SK-N-SH (cell line): ENCODE measurements at regions of chr2 and their contacts with region 1.

Region 1: GRCh38 chr2:26577434-26578112 is 63.6 kb downstream of the CIB4 start:
- DNase-seq: peak; percentile 94
- H3K4me3 ChIP-seq: peak overlapping the region in 1 of 2 experiments; percentile 2; a peak in 1 of 4 replicates
- H3K27ac ChIP-seq: no peak overlapping the region
- H3K4me1 ChIP-seq: peaks cover 0 to 3% of the 10 kb centered on the region in 2 experiments; a peak in 1 of 4 replicates
- H3K27me3 ChIP-seq: peaks cover 67% of the 10 kb centered on the region
- CTCF ChIP-seq: peak; percentile 99
- EP300 ChIP-seq: no peak
- RAD21 ChIP-seq: peak; percentile 98

Region 2: GRCh38 chr2:26345545-26346453 is 231.8 kb before region 1 on chr2 and contains the start of gene SELENOI:
- CTCF ChIA-PET with region 1: interaction called, 16 read pairs
- POLR2A ChIA-PET with region 1: interaction called, 4 read pairs
- DNase-seq: peak; percentile 100
- H3K4me3 ChIP-seq: peak within 1 kb of the TSS; percentile 90 to 95
- H3K27ac ChIP-seq: peak within 1 kb of the TSS; percentile 87 to 95
- H3K4me1 ChIP-seq: peaks cover 10 to 23% of the 10 kb centered on the region in 2 experiments; a peak in 3 of 4 replicates
- H3K27me3 ChIP-seq: no peaks in the 10 kb centered on the region
- CTCF ChIP-seq: no peak
- EP300 ChIP-seq: peak in 1 of 2 experiments; percentile 46; a peak in 1 of 4 replicates
- RAD21 ChIP-seq: no peak; the same call in 1 of the 2 replicates
- polyA plus RNA-seq, gene SELENOI: 4.4 and 6.2 TPM in 2 replicates

Region 3: GRCh38 chr2:26483957-26484565 is 93.5 kb before region 1 on chr2:
- CTCF ChIA-PET with region 1: interaction called, 10 read pairs
- POLR2A ChIA-PET with region 1: no interaction called
- DNase-seq: no peak
- H3K4me3 ChIP-seq: no peak overlapping the region
- H3K27ac ChIP-seq: no peak overlapping the region
- H3K4me1 ChIP-seq: no peaks in the 10 kb centered on the region
- H3K27me3 ChIP-seq: peaks cover 27% of the 10 kb centered on the region; the same call in 1 of the 2 replicates
- CTCF ChIP-seq: no peak
- EP300 ChIP-seq: no peak
- RAD21 ChIP-seq: no peak

Region 4: GRCh38 chr2:26542194-26542455 is 35.4 kb before region 1 on chr2:
- CTCF ChIA-PET with region 1: interaction called, 39 read pairs
- POLR2A ChIA-PET with region 1: no interaction called
- DNase-seq: no peak
- H3K4me3 ChIP-seq: no peak overlapping the region
- H3K27ac ChIP-seq: no peak overlapping the region
- H3K4me1 ChIP-seq: no peaks in the 10 kb centered on the region
- H3K27me3 ChIP-seq: peaks cover 5% of the 10 kb centered on the region; the same call in 1 of the 2 replicates
- CTCF ChIP-seq: no peak
- EP300 ChIP-seq: no peak
- RAD21 ChIP-seq: no peak

Region 5: GRCh38 chr2:26598336-26598995 is 20.9 kb after region 1 on chr2:
- CTCF ChIA-PET with region 1: interaction called, 74 read pairs
- POLR2A ChIA-PET with region 1: no interaction called
- DNase-seq: no peak
- H3K4me3 ChIP-seq: no peak overlapping the region
- H3K27ac ChIP-seq: no peak overlapping the region
- H3K4me1 ChIP-seq: no peaks in the 10 kb centered on the region
- H3K27me3 ChIP-seq: peaks cover 30% of the 10 kb centered on the region; the same call in 1 of the 2 replicates
- CTCF ChIP-seq: no peak
- EP300 ChIP-seq: no peak
- RAD21 ChIP-seq: no peak

Region 6: DNA sequence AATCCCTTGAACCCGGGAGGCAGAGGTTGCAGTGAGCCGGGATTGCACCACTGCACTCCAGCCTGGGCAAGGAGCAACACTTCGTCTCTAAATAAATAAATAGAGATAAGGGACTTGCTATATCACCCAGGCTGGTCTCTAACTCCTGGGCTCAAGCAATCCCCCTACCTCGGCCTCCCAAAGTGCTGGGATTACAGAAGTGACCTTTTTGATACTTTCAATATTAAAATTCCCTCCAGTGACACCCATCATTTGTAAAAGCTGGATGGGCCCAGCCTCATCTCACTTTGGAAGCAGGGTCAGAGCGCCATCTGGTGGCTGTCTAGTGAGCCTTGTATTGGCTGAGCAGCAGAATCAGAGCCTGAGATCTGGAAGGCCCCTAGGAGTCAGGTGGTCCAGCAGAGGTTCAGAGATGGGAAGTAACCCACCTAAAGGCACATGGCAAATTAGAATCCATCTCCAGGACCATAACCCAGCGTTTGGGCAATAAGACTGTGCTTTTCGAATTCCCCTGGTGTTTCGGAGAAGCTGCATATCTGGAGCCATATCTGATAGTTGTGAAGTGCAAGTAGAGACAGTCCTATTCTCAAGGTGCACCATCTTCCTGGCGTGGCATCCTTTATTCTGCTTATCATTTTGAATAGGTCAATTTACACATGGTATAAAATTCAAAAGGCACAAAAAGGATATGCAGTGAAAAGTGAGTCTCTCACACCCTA is 168.2 kb after region 1 on chr2:
- CTCF ChIA-PET with region 1: interaction called, 128 read pairs
- POLR2A ChIA-PET with region 1: interaction called, 5 read pairs
- DNase-seq: peak; percentile 85
- H3K4me3 ChIP-seq: no peak overlapping the region
- H3K27ac ChIP-seq: no peak overlapping the region
- H3K4me1 ChIP-seq: peaks cover 0 to 3% of the 10 kb centered on the region in 2 experiments; a peak in 1 of 4 replicates
- H3K27me3 ChIP-seq: no peaks in the 10 kb centered on the region
- CTCF ChIP-seq: peak; percentile 99
- EP300 ChIP-seq: no peak
- RAD21 ChIP-seq: peak; percentile 100